ENCODE measurements at regions of chr1 and their contacts with region 1.

Region 1: DNA sequence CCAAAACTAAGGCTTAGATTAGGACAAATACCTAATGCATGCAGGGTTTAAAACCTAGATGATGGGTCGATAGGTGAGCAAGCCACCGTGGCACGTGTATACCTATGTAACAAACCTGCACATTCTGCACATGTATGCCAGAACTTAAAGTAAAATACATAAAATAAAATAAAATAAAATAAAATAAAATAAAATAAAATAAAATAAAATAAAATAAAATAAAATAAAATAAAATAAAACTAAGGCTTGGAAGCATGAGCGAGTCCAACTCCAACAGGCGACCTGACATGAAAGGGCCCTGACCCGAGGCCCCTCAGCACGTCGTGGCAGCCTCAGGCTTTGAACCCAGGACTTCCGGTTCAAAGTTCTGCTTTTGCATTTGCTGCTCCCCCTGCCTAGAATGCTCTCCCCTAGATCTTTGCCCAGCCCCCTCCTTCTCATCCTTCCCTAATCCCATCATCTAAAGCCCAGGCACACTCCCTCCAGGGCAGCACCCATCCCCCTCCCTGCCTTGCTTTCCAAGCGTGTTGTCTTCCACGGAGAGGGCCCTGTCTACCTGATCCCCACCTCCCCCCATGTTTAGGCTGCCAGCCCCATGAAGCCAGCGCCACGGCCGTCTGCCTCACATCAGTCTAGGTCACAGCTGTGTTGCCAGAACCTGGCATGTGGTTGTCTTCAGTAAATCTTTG is 64.3 kb downstream of the TAS1R2 start:
- DNase-seq: no peak
- H3K4me3 ChIP-seq: no peak overlapping the region
- H3K27ac ChIP-seq: no peak overlapping the region
- H3K4me1 ChIP-seq: no peaks in the 10 kb centered on the region
- H3K27me3 ChIP-seq: peaks cover 1% of the 10 kb centered on the region
- CTCF ChIP-seq: no peak

Region 2: GRCh38 chr1:18266391-18266790 is 528.8 kb before region 1 on chr1:
- CTCF ChIA-PET with region 1: no interaction called
- dilution Hi-C with region 1: no loop called
- in situ Hi-C with region 1: no loop called
- intact Hi-C with region 1: no loop called
- DNase-seq: no peak
- H3K4me3 ChIP-seq: no peak overlapping the region
- H3K27ac ChIP-seq: no peak overlapping the region
- H3K4me1 ChIP-seq: no peaks in the 10 kb centered on the region
- H3K27me3 ChIP-seq: no peaks in the 10 kb centered on the region
- CTCF ChIP-seq: no peak

Region 3: DNA sequence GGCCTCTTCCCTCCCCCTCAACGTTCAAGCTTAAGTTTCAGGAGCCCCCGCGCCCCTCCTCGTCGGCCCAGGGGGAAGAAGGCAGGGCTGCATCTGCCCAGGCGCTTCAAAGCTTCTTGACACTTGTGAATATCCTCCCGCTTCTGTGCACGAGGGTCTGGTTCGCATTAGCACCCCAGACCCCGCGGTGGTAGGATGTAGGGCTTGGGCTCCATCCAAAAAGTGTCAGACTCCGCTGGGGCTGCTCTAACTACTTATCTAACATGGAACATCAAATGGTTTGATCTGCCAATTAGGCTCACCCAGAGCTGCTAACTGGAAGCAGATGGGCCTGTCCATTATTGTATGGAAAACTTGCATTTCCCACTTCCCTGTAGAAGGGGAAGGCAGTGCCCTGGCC is 35.5 kb after region 1 on chr1:
- CTCF ChIA-PET with region 1: no interaction called
- dilution Hi-C with region 1: loop called (anchors 5 kb)
- in situ Hi-C with region 1: no loop called
- intact Hi-C with region 1: no loop called
- DNase-seq: no peak
- H3K4me3 ChIP-seq: no peak overlapping the region
- H3K27ac ChIP-seq: no peak overlapping the region
- H3K4me1 ChIP-seq: no peaks in the 10 kb centered on the region
- H3K27me3 ChIP-seq: no peaks in the 10 kb centered on the region
- CTCF ChIP-seq: no peak